Thyroid gland (tissue), 4 donors: ENCODE measurements at regions of chr15 and their contacts with region 1.

Region 1: GRCh38 chr15:58521293-58521991 is 89.7 kb downstream of the LIPC start:
- DNase-seq: peak; percentile 64 to 69
- H3K4me3 ChIP-seq: no peak overlapping the region
- H3K27ac ChIP-seq: peak overlapping the region; percentile 9 to 47 (median 43)
- H3K4me1 ChIP-seq: peaks cover 11 to 37% of the 10 kb centered on the region in 2 donors
- H3K27me3 ChIP-seq: no peaks in the 10 kb centered on the region
- CTCF ChIP-seq: no peak
- POLR2A ChIP-seq: no peak

Region 2: GRCh38 chr15:58475573-58476524 is 45.6 kb before region 1 on chr15:
- intact Hi-C with region 1: loop called (anchors 10 kb)
- DNase-seq: peak; percentile 88 to 91
- H3K4me3 ChIP-seq: no peak overlapping the region
- H3K27ac ChIP-seq: peak overlapping the region; percentile 72 to 83 (median 82)
- H3K4me1 ChIP-seq: peaks cover 53 to 55% of the 10 kb centered on the region in 2 donors
- H3K27me3 ChIP-seq: no peaks in the 10 kb centered on the region
- CTCF ChIP-seq: no peak
- POLR2A ChIP-seq: peak in 1 of 2 donors; percentile 19